AG04450 (cell line): ENCODE measurements at regions of chr12 and their contacts with region 1.

Region 1: GRCh38 chr12:120175062-120175461 is 19.5 kb downstream of the GCN1 start:
- DNase-seq: no peak
- H3K4me3 ChIP-seq: no peak overlapping the region
- H3K27ac ChIP-seq: no peak overlapping the region
- H3K27me3 ChIP-seq: no peaks in the 10 kb centered on the region
- CTCF ChIP-seq: no peak

Region 2: GRCh38 chr12:120139958-120140357 is 35.1 kb before region 1 on chr12:
- CTCF ChIA-PET with region 1: no interaction called
- POLR2A ChIA-PET with region 1: interaction called, 20 read pairs
- DNase-seq: peak; percentile 32
- H3K4me3 ChIP-seq: no peak overlapping the region
- H3K27ac ChIP-seq: no peak overlapping the region
- H3K27me3 ChIP-seq: no peaks in the 10 kb centered on the region
- CTCF ChIP-seq: no peak